B cell (primary cell): ENCODE measurements at regions of chr3 and their contacts with region 1.

Region 1: DNA sequence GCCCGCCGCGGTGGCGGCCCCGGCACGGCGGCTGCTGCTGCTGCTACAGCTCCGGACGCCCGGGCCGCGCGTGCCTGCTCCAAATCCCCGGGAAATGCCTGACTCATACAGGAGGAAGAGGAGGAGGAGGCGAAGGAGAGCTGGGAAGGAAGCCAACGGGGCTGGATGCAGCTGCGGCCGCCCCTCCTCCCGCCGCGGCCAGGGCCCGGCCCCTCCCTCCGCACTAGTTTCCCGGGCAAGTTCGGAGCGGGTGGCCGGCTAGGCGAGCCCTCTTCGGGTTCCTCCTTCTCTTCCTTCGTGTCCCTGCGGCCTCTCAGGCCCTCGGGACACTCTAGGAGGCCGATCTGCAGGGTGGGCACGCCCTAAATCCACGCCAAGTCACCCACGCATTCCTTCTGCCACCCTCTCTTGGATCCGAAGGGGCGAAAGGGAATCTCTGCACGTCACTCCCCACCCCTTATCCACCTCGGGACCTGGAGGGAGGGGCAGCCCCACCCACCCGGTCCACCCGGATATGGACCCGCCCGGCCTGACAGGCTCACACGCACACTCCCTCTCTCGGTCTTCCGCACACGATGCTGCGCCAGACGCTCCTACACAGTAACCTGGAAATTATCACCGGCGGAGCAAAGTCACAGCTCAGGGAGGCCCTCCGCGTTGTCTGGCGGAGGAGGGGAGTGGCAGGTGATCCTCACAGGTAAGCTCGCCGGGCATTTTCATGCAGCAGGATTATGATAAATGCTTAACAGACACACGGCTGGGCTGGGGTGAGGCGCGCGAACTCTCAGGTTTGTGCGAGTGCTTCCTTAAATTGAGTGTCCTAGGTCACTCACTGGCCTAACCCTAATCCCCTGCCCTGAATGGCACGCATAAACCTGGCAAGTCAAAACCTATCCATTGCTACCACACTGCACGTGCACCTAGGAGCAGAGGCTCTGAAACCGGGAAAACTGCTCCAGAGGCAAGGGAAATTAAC is at the starts of genes OSBPL10 and ZNF860:
- DNase-seq: peak; percentile 75
- ATAC-seq: peak; percentile 64
- H3K4me3 ChIP-seq: peak within 1 kb of the TSS; percentile 75 to 95 (median 88)
- H3K4me3 Mint-ChIP-seq: peak within 1 kb of the TSS; percentile 99
- H3K27ac ChIP-seq: peak within 1 kb of the TSS; percentile 70 to 84
- H3K27ac Mint-ChIP-seq: peak within 1 kb of the TSS; percentile 98
- H3K4me1 ChIP-seq: peaks cover 75% of the 10 kb centered on the region in 2 donors
- H3K4me1 Mint-ChIP-seq: peaks cover 78% of the 10 kb centered on the region
- H3K27me3 ChIP-seq: no peaks in the 10 kb centered on the region
- H3K27me3 Mint-ChIP-seq: no peaks in the 10 kb centered on the region
- CTCF ChIP-seq: no peak
- total RNA-seq, gene OSBPL10: 310 and 317 TPM in 2 replicates
- total RNA-seq, gene ZNF860: 41.4 and 45.9 TPM in 2 replicates

Region 2: DNA sequence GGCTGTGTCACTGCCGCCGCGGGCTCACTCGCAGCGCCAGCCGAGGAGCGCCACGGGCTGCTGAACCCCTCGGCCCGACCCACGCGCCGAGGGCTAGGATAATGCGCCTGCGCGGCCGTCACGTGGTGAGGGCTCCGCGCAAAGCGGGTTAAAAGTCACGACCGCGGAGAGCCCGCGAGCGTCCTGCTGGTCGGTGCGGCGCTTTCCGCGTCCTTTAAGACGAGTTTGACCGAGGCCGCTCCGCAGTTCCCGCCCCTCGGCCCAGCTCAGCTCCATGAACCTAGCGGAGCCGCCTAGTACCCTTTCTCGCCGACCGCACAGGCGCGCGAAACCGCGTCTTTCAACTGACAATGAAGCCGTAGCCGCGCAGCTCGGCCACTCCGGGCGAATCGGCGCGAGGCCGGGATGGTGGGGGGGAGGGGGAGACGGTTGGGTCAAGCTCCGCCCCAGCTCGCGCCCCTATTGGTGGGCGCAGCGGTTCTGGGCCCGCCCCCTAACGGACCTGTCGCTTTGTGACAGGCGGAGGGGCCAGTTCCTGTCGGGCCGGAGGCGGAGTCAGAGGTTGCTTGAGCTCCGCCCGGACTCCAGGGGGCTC is 449.4 kb before region 1 on chr3:
- CTCF ChIA-PET with region 1: interaction called, 3 read pairs
- POLR2A ChIA-PET with region 1: interaction called, 17 read pairs
- intact Hi-C with region 1: no loop called
- DNase-seq: peak; percentile 99
- ATAC-seq: peak; percentile 84
- H3K4me3 ChIP-seq: peak overlapping the region; percentile 36 to 86 (median 82)
- H3K4me3 Mint-ChIP-seq: peak overlapping the region; percentile 98
- H3K27ac ChIP-seq: peak overlapping the region; percentile 94 to 98
- H3K27ac Mint-ChIP-seq: peak overlapping the region; percentile 99
- H3K4me1 ChIP-seq: peaks cover 36 to 37% of the 10 kb centered on the region in 2 donors
- H3K4me1 Mint-ChIP-seq: peaks cover 31% of the 10 kb centered on the region
- H3K27me3 ChIP-seq: no peaks in the 10 kb centered on the region
- H3K27me3 Mint-ChIP-seq: peaks cover 3% of the 10 kb centered on the region
- CTCF ChIP-seq: no peak

Region 3: GRCh38 chr3:31918179-31919168 is 63.0 kb before region 1 on chr3:
- CTCF ChIA-PET with region 1: interaction called, 6 read pairs
- POLR2A ChIA-PET with region 1: no interaction called
- intact Hi-C with region 1: loop called (anchors 2 kb)
- DNase-seq: peak; percentile 46
- ATAC-seq: peak; percentile 64
- H3K4me3 ChIP-seq: peak overlapping the region in 1 of 5 experiments; percentile 9
- H3K4me3 Mint-ChIP-seq: peak overlapping the region; percentile 74
- H3K27ac ChIP-seq: peak overlapping the region; percentile 45 to 79
- H3K27ac Mint-ChIP-seq: peak overlapping the region; percentile 91
- H3K4me1 ChIP-seq: peaks cover 45 to 55% of the 10 kb centered on the region in 2 donors
- H3K4me1 Mint-ChIP-seq: peaks cover 80% of the 10 kb centered on the region
- H3K27me3 ChIP-seq: no peaks in the 10 kb centered on the region
- H3K27me3 Mint-ChIP-seq: no peaks in the 10 kb centered on the region
- CTCF ChIP-seq: no peak

Region 4: DNA sequence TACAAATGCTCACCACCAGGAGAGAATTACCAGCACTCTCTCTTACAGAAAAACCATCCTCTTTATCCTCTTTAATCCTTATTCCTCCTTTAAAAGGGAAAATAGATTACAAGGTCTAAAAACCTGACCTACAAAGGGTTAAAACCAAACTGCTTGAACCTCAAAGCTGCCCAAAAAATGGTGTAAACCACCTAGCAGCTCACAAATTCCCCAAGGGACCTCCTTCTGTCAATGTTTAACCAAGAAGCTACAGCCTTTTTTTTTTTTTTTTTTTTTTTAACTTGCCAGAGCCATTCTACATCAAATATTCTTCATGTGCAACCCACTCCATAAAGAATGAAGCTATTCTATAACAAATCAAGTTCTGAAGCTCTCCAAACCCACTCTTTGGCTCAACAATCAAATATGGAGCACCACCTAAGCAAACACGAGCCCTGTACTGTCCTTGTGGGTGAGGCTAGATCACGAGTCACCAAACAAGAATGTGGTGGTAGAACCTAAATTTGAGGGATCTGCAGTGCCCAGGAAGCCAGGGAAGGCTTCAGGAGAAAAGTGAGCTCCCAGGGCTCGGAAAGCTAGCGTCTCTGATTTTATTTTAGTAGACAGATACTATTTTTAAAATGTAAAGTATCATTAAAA is 20.6 kb before region 1 on chr3:
- CTCF ChIA-PET with region 1: interaction called, 8 read pairs
- POLR2A ChIA-PET with region 1: interaction called, 15 read pairs
- intact Hi-C with region 1: loop called (anchors 2 kb)
- DNase-seq: peak; percentile 71
- ATAC-seq: peak; percentile 65
- H3K4me3 ChIP-seq: peak overlapping the region in 3 of 5 experiments; percentile 34 to 60 (median 36)
- H3K4me3 Mint-ChIP-seq: peak overlapping the region; percentile 89
- H3K27ac ChIP-seq: peak overlapping the region; percentile 56 to 88
- H3K27ac Mint-ChIP-seq: peak overlapping the region; percentile 95
- H3K4me1 ChIP-seq: peaks cover 76 to 84% of the 10 kb centered on the region in 2 donors
- H3K4me1 Mint-ChIP-seq: peaks cover 77% of the 10 kb centered on the region
- H3K27me3 ChIP-seq: no peaks in the 10 kb centered on the region
- H3K27me3 Mint-ChIP-seq: no peaks in the 10 kb centered on the region
- CTCF ChIP-seq: no peak

Region 5: DNA sequence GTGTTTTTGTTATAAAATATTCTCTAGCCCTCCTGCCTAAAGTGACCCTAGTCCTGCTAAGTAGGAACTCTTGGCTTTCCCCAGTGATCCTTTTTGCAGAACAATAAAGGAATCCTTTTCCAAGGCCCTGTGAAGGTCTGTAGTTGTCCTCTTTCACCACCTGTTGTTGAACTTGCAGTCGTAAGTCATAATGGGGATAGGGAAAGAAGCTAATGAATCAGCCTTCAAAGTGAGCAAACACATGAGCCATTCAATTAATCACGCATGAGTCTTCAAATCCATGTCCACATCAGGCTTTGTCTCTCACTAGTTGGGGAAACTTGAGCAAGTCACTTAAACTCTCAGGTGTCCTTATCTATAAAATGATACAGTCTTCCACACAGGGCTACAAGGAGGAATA is 27.6 kb after region 1 on chr3:
- CTCF ChIA-PET with region 1: no interaction called
- POLR2A ChIA-PET with region 1: no interaction called
- intact Hi-C with region 1: loop called (anchors 1 kb)
- DNase-seq: no peak
- ATAC-seq: no peak
- H3K4me3 ChIP-seq: no peak overlapping the region
- H3K4me3 Mint-ChIP-seq: peak overlapping the region; percentile 39
- H3K27ac ChIP-seq: no peak overlapping the region
- H3K27ac Mint-ChIP-seq: peak overlapping the region; percentile 15
- H3K4me1 ChIP-seq: peaks cover 18 to 19% of the 10 kb centered on the region in 2 donors
- H3K4me1 Mint-ChIP-seq: peaks cover 33% of the 10 kb centered on the region
- H3K27me3 ChIP-seq: no peaks in the 10 kb centered on the region
- H3K27me3 Mint-ChIP-seq: no peaks in the 10 kb centered on the region
- CTCF ChIP-seq: no peak

Region 6: DNA sequence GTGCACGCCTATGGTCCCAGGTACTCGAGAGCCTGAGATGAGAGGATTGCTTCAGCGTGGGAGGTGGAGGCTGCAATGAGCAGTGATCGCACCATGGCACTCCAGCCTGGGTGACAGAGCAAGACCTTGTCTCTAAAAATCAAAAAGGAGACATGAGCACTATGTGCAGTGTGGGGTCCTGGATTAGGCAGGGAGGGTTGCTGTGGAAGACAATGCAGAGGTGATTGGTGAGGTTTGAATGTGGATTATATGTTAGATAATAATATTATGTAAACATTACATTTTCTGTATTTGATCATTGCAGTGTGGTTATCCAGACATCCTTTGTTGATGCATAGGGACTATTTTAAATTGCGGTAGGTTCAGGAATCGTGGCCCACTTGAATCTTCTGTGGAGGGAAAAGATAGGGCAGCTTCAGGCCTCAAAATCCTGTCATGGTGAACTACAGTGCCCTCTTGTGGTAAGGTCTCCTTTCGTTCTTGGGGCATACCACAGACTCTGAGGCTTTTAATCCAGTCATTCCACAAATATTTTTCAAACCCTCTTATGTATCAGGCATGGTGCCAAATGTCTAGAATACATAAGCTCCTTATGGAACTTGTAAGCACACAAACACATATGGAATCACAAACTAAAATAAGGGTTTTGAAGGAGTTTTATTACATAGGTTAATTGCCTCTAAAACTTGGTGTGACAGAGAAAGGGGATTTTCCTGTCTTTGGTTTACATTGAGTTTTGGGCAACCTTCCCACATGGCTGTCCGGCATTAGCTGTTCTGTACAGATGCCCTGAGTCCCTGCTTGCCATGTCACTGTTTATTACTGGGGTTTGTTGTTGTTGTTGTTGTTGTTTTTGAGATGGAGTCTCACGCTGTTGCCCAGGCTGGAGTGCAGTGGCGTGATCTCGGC is 162.6 kb after region 1 on chr3:
- CTCF ChIA-PET with region 1: interaction called, 8 read pairs
- POLR2A ChIA-PET with region 1: no interaction called
- intact Hi-C with region 1: loop called (anchors 10 kb)
- DNase-seq: peak; percentile 78
- ATAC-seq: peak; percentile 51
- H3K4me3 ChIP-seq: no peak overlapping the region
- H3K4me3 Mint-ChIP-seq: no peak overlapping the region
- H3K27ac ChIP-seq: no peak overlapping the region
- H3K27ac Mint-ChIP-seq: peak overlapping the region; percentile 52
- H3K4me1 ChIP-seq: peaks cover 12 to 18% of the 10 kb centered on the region in 2 donors
- H3K4me1 Mint-ChIP-seq: peaks cover 21% of the 10 kb centered on the region
- H3K27me3 ChIP-seq: no peaks in the 10 kb centered on the region
- H3K27me3 Mint-ChIP-seq: no peaks in the 10 kb centered on the region
- CTCF ChIP-seq: peak; percentile 83

Region 7: DNA sequence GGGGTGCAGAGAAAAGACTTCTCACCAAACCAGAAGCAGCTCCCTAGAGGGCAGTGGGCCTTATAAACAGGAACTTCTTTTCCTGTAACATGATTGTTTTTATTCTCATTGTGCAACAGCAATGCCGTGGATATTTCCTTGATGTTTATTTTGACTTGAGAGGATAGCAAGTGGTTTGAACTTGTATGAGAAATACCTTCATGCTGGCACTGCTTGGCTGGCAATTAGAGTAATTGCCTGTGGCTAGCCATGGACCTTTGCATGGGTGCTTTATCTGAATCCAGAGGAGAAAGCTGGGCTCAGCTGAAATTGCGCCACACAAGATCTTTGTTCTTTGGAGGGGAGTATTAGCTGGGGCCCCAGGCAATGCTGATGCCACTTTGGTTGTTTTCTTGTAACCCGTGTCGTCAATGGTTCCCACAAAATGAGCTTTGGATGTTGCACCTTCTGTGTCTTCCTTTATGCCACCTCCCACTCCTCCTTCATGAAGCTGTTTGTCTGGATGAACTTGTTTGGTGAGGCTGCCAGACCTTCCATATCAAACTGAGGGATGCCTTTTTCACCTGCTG is 294.9 kb after region 1 on chr3:
- CTCF ChIA-PET with region 1: no interaction called
- POLR2A ChIA-PET with region 1: no interaction called
- intact Hi-C with region 1: no loop called
- DNase-seq: no peak
- ATAC-seq: no peak
- H3K4me3 ChIP-seq: no peak overlapping the region
- H3K4me3 Mint-ChIP-seq: no peak overlapping the region
- H3K27ac ChIP-seq: no peak overlapping the region
- H3K27ac Mint-ChIP-seq: no peak overlapping the region
- H3K4me1 ChIP-seq: peaks cover 4 to 11% of the 10 kb centered on the region in 2 donors
- H3K4me1 Mint-ChIP-seq: peaks cover 9% of the 10 kb centered on the region
- H3K27me3 ChIP-seq: no peaks in the 10 kb centered on the region
- H3K27me3 Mint-ChIP-seq: peaks cover 15% of the 10 kb centered on the region
- CTCF ChIP-seq: no peak